AG04449 (cell line): ENCODE measurements at regions of chr5 and their contacts with region 1.

Region 1: GRCh38 chr5:142769741-142770631 is at the start of gene ARHGAP26:
- DNase-seq: peak; percentile 65
- H3K4me3 ChIP-seq: peak within 1 kb of the TSS; percentile 99
- CTCF ChIP-seq: peak; percentile 70

Region 2: DNA sequence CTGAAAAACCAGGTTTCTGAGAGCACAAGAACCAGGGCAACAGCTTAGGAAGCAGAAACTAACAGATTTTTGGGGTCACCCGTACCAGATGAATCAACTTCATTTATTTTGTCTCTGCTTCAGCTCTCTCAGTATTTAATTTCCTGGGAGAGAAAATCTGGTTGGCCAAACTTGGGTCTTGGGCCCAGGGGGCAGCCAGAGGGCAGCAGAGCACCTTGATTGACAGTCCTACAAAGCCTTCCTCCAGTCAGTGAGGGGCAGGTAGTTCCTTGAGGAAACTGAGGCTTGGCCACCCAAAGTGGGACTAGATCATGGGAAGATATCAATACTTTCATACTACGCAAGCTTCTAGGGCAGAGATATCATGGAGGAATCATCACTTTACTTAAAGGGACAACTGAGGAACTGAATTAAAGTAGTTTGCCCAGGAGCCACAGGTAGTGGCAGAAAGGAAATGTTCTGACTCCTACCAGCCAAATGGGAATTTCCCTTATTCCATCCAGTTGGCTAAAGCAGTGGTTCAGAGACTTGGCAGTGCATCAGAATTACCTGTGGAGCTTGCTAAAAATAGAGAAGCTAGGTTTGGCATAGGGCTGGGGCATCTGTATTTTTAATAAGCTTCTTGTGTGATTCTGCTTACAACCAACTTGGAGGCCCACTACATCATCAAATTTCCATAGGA is 21.3 kb before region 1 on chr5:
- CTCF ChIA-PET with region 1: interaction called, 12 read pairs
- POLR2A ChIA-PET with region 1: interaction called, 7 read pairs
- DNase-seq: no peak
- H3K4me3 ChIP-seq: no peak overlapping the region
- CTCF ChIP-seq: no peak

Region 3: GRCh38 chr5:142783601-142784341 is 13.8 kb after region 1 on chr5:
- CTCF ChIA-PET with region 1: interaction called, 7 read pairs
- POLR2A ChIA-PET with region 1: interaction called, 12 read pairs
- DNase-seq: no peak
- H3K4me3 ChIP-seq: no peak overlapping the region
- CTCF ChIP-seq: no peak

Region 4: GRCh38 chr5:142808878-142809598 is 39.1 kb after region 1 on chr5:
- CTCF ChIA-PET with region 1: no interaction called
- POLR2A ChIA-PET with region 1: no interaction called
- DNase-seq: no peak
- H3K4me3 ChIP-seq: no peak overlapping the region
- CTCF ChIP-seq: no peak

Region 5: DNA sequence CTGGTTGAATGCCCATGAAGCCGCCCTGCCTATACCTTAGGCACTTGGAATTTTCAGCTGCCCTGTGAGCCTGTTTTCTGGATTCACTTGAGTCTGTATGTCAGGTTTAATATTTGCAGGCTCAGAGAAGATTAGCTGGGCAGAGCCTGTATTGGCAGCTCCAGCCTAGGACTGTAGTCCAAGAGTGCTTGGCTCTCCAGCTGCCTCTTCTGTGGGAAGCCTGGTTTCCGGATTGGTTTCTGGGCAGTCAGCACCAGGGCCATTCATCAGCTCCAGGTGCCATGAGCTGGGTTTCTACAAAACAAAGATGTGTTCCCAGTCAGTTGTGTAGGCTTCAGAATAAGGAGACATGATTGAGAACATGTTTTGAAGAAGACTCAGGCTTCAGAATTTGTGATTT is 90.3 kb after region 1 on chr5:
- CTCF ChIA-PET with region 1: interaction called, 10 read pairs
- POLR2A ChIA-PET with region 1: no interaction called
- DNase-seq: no peak
- H3K4me3 ChIP-seq: no peak overlapping the region
- CTCF ChIP-seq: no peak